Activated CD4-positive, alpha-beta T cell treated with anti-CD3 and anti-CD28 coated beads for 36 hours (primary cell): ENCODE measurements at regions of chr6 and their contacts with region 1.

Region 1: GRCh38 chr6:111483736-111484632 is 966 bp upstream of the REV3L start:
- DNase-seq: peak; percentile 92
- ATAC-seq: peak; percentile 52
- H3K4me3 Mint-ChIP-seq: peak overlapping the region; percentile 94
- H3K27ac Mint-ChIP-seq: peak overlapping the region; percentile 100
- H3K4me1 Mint-ChIP-seq: peaks cover 60% of the 10 kb centered on the region
- H3K27me3 Mint-ChIP-seq: no peaks in the 10 kb centered on the region

Region 2: DNA sequence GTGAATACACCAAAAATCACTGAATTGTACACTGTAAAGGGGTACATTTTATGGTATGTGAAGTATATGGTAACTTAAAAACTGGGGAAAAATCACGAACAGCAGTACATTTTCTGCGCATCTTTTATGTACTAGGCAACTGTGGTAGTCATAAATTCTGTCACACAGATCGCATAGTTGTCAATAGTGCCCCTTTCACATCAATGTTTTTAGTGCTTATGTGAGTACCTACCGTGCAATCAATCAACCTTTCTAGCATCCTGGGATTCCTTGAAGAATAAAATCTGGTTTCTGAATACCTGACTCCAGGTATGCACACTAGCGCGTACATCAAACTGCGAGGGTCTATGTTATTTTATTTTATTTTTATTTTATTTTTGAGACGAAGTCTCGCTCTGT is 502.8 kb before region 1 on chr6:
- CTCF ChIA-PET with region 1: no interaction called
- POLR2A ChIA-PET with region 1: no interaction called
- intact Hi-C with region 1: loop called in 1 of 2 experiments (anchors 1 kb)
- DNase-seq: no peak
- ATAC-seq: no peak
- H3K4me3 Mint-ChIP-seq: peak overlapping the region; percentile 99
- H3K27ac Mint-ChIP-seq: peak overlapping the region; percentile 97
- H3K4me1 Mint-ChIP-seq: peaks cover 31% of the 10 kb centered on the region
- H3K27me3 Mint-ChIP-seq: no peaks in the 10 kb centered on the region

Region 3: GRCh38 chr6:111259089-111259831 is 224.7 kb before region 1 on chr6:
- CTCF ChIA-PET with region 1: interaction called, 27 read pairs
- POLR2A ChIA-PET with region 1: interaction called, 10 read pairs
- intact Hi-C with region 1: loop called (anchors 1 kb)
- DNase-seq: peak; percentile 99
- ATAC-seq: peak; percentile 96
- H3K4me3 Mint-ChIP-seq: peak overlapping the region; percentile 78
- H3K27ac Mint-ChIP-seq: peak overlapping the region; percentile 56
- H3K4me1 Mint-ChIP-seq: peaks cover 30% of the 10 kb centered on the region
- H3K27me3 Mint-ChIP-seq: no peaks in the 10 kb centered on the region

Region 4: DNA sequence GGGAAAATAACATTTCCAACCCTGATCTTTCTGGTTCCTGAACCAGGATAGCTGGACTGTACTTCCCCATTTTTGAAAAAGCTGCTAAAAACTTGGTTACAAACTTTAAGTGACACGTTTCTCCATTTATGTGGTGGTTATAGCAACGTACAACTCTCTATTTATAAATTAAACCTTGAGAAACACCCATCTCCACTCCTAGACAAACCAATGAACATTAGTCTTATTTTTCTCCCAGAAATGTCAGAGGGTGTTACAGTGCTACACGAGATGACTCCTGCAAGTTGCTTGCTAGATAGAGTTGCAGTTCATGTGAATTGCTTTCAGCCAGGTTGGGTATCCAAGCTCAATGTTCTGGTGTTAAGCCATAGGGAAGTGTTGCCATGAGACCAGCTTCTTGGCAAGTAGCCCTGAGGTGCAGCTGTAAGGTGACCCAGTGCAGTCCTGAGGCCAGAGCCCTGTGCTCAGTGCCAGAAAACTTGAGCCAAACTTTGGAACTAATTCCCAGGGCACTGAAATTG is 50.3 kb after region 1 on chr6:
- CTCF ChIA-PET with region 1: no interaction called
- POLR2A ChIA-PET with region 1: interaction called, 3 read pairs
- intact Hi-C with region 1: loop called (anchors 1 kb)
- DNase-seq: no peak
- ATAC-seq: no peak
- H3K4me3 Mint-ChIP-seq: no peak overlapping the region
- H3K27ac Mint-ChIP-seq: no peak overlapping the region
- H3K4me1 Mint-ChIP-seq: peaks cover 39% of the 10 kb centered on the region
- H3K27me3 Mint-ChIP-seq: no peaks in the 10 kb centered on the region

Region 5: DNA sequence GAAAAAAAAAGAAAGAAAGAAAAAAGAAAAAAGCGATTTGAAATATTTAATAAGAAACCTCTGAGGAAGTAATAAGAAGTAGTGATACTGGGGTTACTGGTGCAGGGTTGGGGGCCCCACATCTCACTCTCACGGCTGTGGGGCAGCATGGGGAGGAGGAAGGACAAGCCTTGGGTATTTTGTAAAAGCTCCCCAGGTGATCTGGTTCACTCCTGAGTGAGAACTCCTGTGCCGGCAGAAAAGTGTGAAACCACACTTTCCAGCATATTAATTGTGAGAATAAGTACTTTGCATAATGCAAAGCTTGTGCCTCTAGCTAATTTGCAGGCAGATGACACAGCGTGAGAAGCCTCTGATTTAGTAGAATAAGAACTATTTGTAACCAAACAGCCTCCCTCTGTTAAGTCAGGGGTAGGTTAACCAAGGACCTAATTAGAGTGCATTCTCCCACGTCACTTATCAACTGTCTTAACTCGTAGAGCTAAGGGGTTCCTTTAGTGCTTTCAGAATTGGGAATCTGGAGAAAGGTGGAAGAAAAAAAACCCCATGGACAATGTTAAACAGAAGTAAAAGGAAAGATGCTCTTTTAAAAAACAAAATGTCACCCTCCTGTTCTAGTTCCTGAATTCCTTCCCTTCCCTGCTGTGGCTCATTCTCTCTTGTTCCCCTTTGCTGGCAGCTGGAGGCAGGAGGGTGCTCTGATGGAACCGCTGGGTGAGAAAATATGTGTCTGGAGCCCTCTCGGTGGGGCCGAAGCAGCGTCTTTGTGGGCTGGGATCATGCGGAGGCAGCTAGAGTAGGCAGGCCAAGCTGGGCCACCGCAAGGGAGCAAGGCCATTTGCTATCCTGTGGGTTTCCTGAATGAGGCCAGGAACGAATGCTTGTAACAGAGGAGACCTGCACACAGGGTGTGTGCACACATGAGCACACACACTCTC is 280.5 kb after region 1 on chr6:
- CTCF ChIA-PET with region 1: no interaction called
- POLR2A ChIA-PET with region 1: no interaction called
- intact Hi-C with region 1: loop called (anchors 2 to 10 kb)
- DNase-seq: peak; percentile 77
- ATAC-seq: peak; percentile 53
- H3K4me3 Mint-ChIP-seq: peak overlapping the region; percentile 68
- H3K27ac Mint-ChIP-seq: peak overlapping the region; percentile 99
- H3K4me1 Mint-ChIP-seq: peaks cover 99% of the 10 kb centered on the region
- H3K27me3 Mint-ChIP-seq: no peaks in the 10 kb centered on the region

Region 6: GRCh38 chr6:111973118-111973761 is 489.3 kb after region 1 on chr6:
- CTCF ChIA-PET with region 1: no interaction called
- POLR2A ChIA-PET with region 1: no interaction called
- intact Hi-C with region 1: loop called in 1 of 2 experiments (anchors 2 kb)
- DNase-seq: peak; percentile 80
- ATAC-seq: peak; percentile 84
- H3K4me3 Mint-ChIP-seq: peak overlapping the region; percentile 65
- H3K27ac Mint-ChIP-seq: peak overlapping the region; percentile 90
- H3K4me1 Mint-ChIP-seq: peaks cover 73% of the 10 kb centered on the region
- H3K27me3 Mint-ChIP-seq: no peaks in the 10 kb centered on the region